Left colon (tissue), 2 donors: ENCODE measurements at regions of chr18 and their contacts with region 1.

Region 1: DNA sequence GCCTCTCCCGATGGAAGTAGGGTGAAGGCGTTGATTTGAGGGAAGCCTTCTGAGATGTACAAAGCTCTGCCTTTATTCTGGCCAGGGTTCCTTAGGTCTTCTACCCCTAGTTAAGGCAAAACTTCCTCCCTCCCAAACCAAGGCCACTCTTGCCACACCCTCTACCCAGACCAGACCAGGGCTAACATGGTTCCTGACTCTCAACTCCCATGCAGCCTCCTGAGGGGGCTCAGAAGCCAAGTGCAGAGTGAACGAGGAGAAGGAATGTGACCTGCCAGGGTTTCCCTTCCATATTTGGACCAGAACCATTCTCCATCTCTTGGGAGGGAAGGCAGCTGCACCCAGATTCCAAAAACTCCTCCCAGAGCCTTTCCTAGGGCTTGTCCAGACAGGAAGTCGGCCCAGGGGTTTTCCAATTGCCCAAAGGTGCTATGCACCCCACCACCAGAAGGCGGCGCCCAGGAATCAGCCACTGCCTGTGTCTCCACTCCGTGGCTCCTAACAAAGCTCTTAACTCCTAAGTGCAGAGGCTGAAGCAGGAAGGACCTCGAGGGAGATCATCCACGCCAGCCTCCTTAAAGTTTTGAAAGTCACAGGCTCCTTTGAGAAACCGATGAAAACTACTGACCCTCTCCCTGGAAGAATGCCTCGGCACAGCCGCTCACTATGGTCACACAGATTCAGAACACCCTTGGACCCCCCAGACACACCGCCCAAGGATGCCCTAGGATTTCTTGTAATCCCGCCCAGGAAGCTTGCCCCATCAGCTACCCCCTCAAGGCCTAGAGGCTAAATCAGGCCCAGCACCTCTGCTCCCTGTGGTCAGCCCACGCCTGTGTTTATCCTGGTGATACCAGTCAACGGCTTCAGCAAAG is 157.8 kb downstream of the SMAD2 start:
- DNase-seq: peak; percentile 49 to 77
- ATAC-seq: peak; percentile 97

Region 2: GRCh38 chr18:47842836-47843235 is 70.2 kb after region 1 on chr18:
- intact Hi-C with region 1: no loop called
- DNase-seq: no peak
- ATAC-seq: no peak

Region 3: GRCh38 chr18:48022531-48023329 is 250.1 kb after region 1 on chr18:
- intact Hi-C with region 1: loop called in 1 of 2 experiments (anchors 5 kb)
- DNase-seq: peak in 1 of 2 donors; percentile 15
- ATAC-seq: peak; percentile 76

Region 4: GRCh38 chr18:48330403-48331022 is 557.9 kb after region 1 on chr18:
- intact Hi-C with region 1: no loop called
- DNase-seq: no peak
- ATAC-seq: no peak